ENCODE measurements at regions of chr11 and their contacts with region 1.

Region 1: DNA sequence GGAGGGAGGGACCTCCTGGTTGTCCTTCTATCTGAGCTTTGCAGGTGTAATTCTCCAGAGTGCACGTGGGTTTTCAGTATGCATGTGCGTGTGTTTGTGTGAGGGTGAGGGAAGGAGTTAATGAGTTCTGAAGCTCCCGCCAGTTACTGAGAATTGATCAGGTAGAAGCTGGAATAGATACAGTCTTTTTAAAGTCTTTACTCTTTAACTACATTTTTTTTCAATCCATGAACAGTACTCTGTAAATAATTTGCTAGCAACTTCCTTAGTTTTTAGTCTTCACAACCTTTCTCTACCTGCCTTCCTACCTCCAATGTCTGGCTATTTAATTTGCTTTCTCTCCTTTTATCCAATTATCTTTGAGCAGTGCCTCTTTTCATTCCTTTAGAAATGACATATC is 25.5 kb downstream of the ARHGAP42 start:
- DNase-seq: no peak
- H3K4me3 Mint-ChIP-seq: no peak overlapping the region
- H3K27ac Mint-ChIP-seq: no peak overlapping the region
- H3K4me1 Mint-ChIP-seq: no peaks in the 10 kb centered on the region
- H3K27me3 Mint-ChIP-seq: peaks cover 1% of the 10 kb centered on the region

Region 2: GRCh38 chr11:99098751-99099150 is 1613.8 kb before region 1 on chr11:
- intact Hi-C with region 1: loop called (anchors 5 kb)
- DNase-seq: no peak
- H3K4me3 Mint-ChIP-seq: no peak overlapping the region
- H3K27ac Mint-ChIP-seq: no peak overlapping the region
- H3K4me1 Mint-ChIP-seq: no peaks in the 10 kb centered on the region
- H3K27me3 Mint-ChIP-seq: no peaks in the 10 kb centered on the region